BJ (cell line): ENCODE measurements at regions of chr17 and their contacts with region 1.

Region 1: GRCh38 chr17:13594762-13595598 is 6.7 kb downstream of the HS3ST3A1 start:
- DNase-seq: no peak
- H3K4me3 ChIP-seq: no peak overlapping the region
- H3K27me3 ChIP-seq: no peaks in the 10 kb centered on the region
- CTCF ChIP-seq: peak; percentile 84

Region 2: GRCh38 chr17:13337864-13338371 is 257.1 kb before region 1 on chr17:
- CTCF ChIA-PET with region 1: interaction called, 19 read pairs
- POLR2A ChIA-PET with region 1: no interaction called
- DNase-seq: no peak
- H3K4me3 ChIP-seq: peak overlapping the region; percentile 32
- H3K27me3 ChIP-seq: no peaks in the 10 kb centered on the region
- CTCF ChIP-seq: peak; percentile 83